Panc1 (cell line): ENCODE measurements at regions of chrX and their contacts with region 1.

Region 1: DNA sequence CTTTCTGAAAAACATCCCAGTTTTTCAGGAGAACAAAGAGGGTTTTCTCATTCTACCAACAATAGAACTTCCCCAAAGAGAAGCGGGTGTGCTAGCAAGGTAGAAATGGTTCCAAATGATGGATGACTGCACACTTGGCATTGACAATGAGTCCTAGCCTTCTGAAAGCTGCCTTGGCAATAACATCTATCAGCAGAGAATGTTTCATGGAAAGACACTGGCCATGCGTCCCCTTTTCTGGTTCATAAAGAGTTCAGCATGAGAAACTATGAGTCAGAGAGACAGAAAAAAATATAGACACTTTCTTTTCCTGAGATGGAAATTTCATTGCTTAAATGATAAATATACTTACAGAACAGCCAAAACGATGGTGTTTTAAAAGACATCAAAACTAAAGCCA is 236.9 kb upstream of the PRKX start:
- DNase-seq: no peak
- ATAC-seq: no peak
- H3K4me3 ChIP-seq: no peak overlapping the region
- H3K27ac ChIP-seq: no peak overlapping the region
- H3K4me1 ChIP-seq: no peaks in the 10 kb centered on the region
- H3K27me3 ChIP-seq: no peaks in the 10 kb centered on the region
- CTCF ChIP-seq: no peak

Region 2: DNA sequence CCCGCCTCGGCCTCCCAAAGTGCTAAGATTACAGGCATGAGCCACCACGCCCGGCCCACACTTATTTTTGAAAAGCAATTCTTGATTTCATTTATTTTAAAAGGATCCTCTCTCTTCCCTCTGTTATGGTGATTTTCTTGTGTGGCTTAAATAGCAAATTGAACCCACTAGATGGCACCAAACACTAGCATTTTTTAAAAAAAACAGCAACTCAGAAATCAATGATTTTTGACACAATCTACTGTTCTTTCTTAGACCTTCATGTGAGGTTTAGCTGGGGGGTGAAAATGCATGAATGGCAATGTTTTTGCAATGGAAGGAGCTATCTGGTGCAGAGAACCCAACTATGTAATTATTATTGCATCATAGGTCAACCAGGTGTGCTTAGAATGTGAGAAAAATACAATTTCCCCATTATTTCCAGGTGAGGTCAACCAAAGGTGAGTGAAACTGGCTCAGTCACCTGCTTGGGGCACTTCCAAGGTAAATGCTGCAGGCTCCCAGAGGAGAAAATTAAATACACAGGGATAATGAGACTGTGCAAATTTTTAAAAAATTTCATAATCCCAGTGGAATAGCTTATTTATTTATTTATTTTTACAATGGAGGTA is 10.3 kb before region 1 on chrX:
- CTCF ChIA-PET with region 1: interaction called, 10 read pairs
- POLR2A ChIA-PET with region 1: no interaction called
- in situ Hi-C with region 1: no loop called
- intact Hi-C with region 1: no loop called
- DNase-seq: no peak
- ATAC-seq: no peak
- H3K4me3 ChIP-seq: no peak overlapping the region
- H3K27ac ChIP-seq: no peak overlapping the region
- H3K4me1 ChIP-seq: no peaks in the 10 kb centered on the region
- H3K27me3 ChIP-seq: no peaks in the 10 kb centered on the region
- CTCF ChIP-seq: peak; percentile 55